H1 (cell line): ENCODE measurements at regions of chr17 and their contacts with region 1.

Region 1: DNA sequence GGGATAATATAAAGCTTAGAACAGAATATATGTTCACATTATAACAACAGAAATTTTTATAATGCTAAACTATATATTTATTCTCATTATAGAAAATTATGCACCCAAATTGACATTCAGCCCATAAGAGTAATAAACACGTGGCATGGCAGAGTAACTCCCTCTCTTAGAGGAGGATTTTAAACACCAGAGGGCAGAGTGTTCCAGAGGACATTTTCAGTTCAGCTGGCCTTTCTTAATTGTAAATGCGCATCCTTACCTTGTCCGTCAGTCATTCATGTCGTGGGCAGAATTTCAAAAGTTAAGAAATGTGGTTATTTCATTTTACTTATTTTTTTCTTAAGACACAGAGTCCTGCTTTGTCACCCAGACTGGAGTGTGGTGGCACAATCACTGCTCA is 147.1 kb downstream of the TANC2 start:
- DNase-seq: no peak
- H3K4me3 ChIP-seq: no peak overlapping the region
- H3K27ac ChIP-seq: no peak overlapping the region
- H3K4me1 ChIP-seq: no peaks in the 10 kb centered on the region
- H3K27me3 ChIP-seq: no peaks in the 10 kb centered on the region
- CTCF ChIP-seq: peak in 2 of 3 experiments; percentile 39 to 44; a peak in 2 of 4 replicates
- EP300 ChIP-seq: no peak
- POLR2A ChIP-seq: no peak
- RAD21 ChIP-seq: peak; percentile 41 to 61

Region 2: DNA sequence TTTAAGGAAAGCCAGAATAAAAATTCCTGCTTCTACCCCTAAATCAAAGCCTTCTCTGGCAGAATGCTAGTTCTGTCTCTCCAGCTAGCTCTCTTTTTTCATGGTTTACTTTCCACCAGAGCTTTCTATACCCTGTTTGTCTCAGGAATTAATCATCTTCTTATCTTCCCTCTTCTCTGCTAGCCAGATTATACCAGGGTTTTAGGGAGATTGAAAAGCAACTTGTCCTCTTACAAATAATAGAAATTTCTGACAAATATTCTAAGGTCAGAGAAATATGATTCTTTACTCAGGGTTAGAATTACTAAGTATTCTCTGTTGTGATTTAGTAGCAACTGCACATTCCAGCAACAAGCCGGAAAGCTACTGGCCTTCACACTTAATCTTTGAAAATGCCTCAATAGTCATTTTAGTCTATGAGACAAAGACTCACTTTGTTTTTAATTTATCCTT is 19.3 kb after region 1 on chr17:
- CTCF ChIA-PET with region 1: interaction called, 18 read pairs
- POLR2A ChIA-PET with region 1: no interaction called
- DNase-seq: no peak
- H3K4me3 ChIP-seq: no peak overlapping the region
- H3K27ac ChIP-seq: no peak overlapping the region
- H3K4me1 ChIP-seq: peaks cover 0 to 6% (median 3%) of the 10 kb centered on the region in 4 experiments; a peak in 4 of 7 replicates
- H3K27me3 ChIP-seq: no peaks in the 10 kb centered on the region
- CTCF ChIP-seq: no peak
- EP300 ChIP-seq: no peak
- POLR2A ChIP-seq: no peak
- RAD21 ChIP-seq: no peak

Region 3: GRCh38 chr17:63293323-63294075 is 180.3 kb after region 1 on chr17:
- CTCF ChIA-PET with region 1: no interaction called
- POLR2A ChIA-PET with region 1: no interaction called
- DNase-seq: no peak
- H3K4me3 ChIP-seq: no peak overlapping the region
- H3K27ac ChIP-seq: no peak overlapping the region
- H3K4me1 ChIP-seq: peaks cover 0 to 6% (median 0%) of the 10 kb centered on the region in 4 experiments; a peak in 1 of 7 replicates
- H3K27me3 ChIP-seq: no peaks in the 10 kb centered on the region
- CTCF ChIP-seq: no peak
- EP300 ChIP-seq: no peak
- POLR2A ChIP-seq: no peak
- RAD21 ChIP-seq: no peak